ENCODE measurements at regions of chr1 and their contacts with region 1.

Region 1: GRCh38 chr1:22673486-22674409 is 20.7 kb downstream of the C1QB start:
- DNase-seq: peak; percentile 58
- H3K4me3 Mint-ChIP-seq: no peak overlapping the region
- H3K27ac Mint-ChIP-seq: no peak overlapping the region
- H3K4me1 Mint-ChIP-seq: no peaks in the 10 kb centered on the region
- H3K27me3 Mint-ChIP-seq: peaks cover 66% of the 10 kb centered on the region
- CTCF ChIP-seq: peak; percentile 63

Region 2: GRCh38 chr1:22889213-22889827 is 215.6 kb after region 1 on chr1:
- CTCF ChIA-PET with region 1: interaction called, 6 read pairs
- intact Hi-C with region 1: loop called (anchors 1 kb)
- DNase-seq: peak; percentile 19
- H3K4me3 Mint-ChIP-seq: no peak overlapping the region
- H3K27ac Mint-ChIP-seq: no peak overlapping the region
- H3K4me1 Mint-ChIP-seq: no peaks in the 10 kb centered on the region
- H3K27me3 Mint-ChIP-seq: no peaks in the 10 kb centered on the region
- CTCF ChIP-seq: peak; percentile 68

Region 3: DNA sequence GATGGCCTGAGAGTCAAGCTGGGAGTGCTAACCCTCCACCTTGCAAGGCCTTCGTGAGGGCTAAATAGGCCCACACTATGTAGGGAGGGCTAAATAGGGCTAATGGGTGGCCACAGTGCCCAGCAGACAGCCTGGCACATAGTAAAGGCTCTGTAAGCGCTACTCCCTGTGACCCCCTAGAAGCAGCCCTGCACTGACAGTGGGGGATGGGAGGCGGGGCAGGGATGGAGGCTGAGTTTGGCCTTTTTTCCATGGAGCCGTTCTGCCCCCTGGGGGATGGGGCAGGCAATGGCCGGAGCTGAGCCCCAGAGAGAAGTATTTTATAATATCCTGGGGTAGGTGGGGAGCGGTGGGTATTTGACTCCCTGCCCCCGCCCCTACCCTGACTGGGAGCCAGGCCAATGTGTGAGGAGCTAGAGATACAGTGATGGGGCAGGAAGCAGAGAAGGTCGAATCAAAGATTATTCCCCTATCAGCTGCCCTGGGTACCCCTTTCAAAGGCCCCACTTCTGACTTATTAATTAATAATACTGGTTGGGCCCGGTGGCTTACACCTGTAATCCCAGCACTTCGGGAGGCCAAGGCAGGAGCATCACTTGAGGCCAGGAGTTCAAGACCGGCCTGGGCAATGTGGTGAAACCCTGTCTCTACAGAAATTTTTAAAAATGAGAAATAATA is 256.6 kb after region 1 on chr1:
- CTCF ChIA-PET with region 1: interaction called, 6 read pairs
- intact Hi-C with region 1: loop called (anchors 1 kb)
- DNase-seq: peak; percentile 72
- H3K4me3 Mint-ChIP-seq: no peak overlapping the region
- H3K27ac Mint-ChIP-seq: no peak overlapping the region
- H3K4me1 Mint-ChIP-seq: no peaks in the 10 kb centered on the region
- H3K27me3 Mint-ChIP-seq: peaks cover 43% of the 10 kb centered on the region
- CTCF ChIP-seq: peak; percentile 74

Region 4: GRCh38 chr1:22969304-22969709 is 295.6 kb after region 1 on chr1:
- CTCF ChIA-PET with region 1: no interaction called
- intact Hi-C with region 1: loop called (anchors 1 kb)
- DNase-seq: no peak
- H3K4me3 Mint-ChIP-seq: no peak overlapping the region
- H3K27ac Mint-ChIP-seq: no peak overlapping the region
- H3K4me1 Mint-ChIP-seq: peaks cover 10% of the 10 kb centered on the region
- H3K27me3 Mint-ChIP-seq: peaks cover 75% of the 10 kb centered on the region
- CTCF ChIP-seq: no peak

Measured in Calu3 (cell line).